ENCODE measurements at regions of chr14 and their contacts with region 1.

Region 1: DNA sequence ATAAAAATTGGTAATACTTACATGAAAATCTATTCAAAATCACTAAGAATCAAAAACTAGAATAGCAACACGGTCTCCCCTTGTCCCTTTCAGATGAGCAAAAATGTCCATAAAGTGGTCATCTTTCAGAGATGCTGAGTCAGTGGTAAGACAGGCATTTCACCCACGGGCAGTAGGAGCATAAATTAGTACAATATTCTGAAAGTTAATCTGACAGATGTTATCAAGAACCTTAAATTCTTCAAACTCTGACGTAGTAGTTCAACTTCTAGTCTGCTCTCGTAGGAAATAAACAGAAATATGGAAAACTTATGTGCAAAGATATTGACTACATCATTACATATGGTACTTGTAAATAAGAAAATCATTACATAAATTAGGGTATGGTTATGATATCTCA is 33.1 kb upstream of the GNPNAT1 start:
- DNase-seq: no peak
- H3K4me3 ChIP-seq: no peak overlapping the region
- CTCF ChIP-seq: no peak
- POLR2A ChIP-seq: no peak

Region 2: DNA sequence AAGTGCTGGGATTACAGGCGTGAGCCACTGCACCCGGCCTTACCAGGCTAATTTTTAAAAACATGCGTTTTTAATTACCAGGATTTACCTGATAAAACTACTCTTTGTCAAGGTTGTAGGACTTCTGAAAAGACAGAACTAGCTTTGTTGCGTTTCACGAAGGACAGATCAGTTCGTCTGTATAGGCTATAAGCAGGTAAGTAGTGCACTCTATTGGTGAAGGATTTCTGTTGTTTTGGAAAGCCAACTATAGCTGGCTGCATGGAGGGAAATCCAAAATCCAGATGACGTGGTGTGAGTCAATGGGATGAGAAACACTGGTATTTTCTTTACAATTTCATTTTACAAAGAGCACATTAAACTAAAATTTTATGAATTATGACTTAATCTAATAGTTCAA is 47.7 kb before region 1 on chr14:
- intact Hi-C with region 1: no loop called
- DNase-seq: no peak
- H3K4me3 ChIP-seq: no peak overlapping the region
- CTCF ChIP-seq: no peak
- POLR2A ChIP-seq: no peak

Region 3: DNA sequence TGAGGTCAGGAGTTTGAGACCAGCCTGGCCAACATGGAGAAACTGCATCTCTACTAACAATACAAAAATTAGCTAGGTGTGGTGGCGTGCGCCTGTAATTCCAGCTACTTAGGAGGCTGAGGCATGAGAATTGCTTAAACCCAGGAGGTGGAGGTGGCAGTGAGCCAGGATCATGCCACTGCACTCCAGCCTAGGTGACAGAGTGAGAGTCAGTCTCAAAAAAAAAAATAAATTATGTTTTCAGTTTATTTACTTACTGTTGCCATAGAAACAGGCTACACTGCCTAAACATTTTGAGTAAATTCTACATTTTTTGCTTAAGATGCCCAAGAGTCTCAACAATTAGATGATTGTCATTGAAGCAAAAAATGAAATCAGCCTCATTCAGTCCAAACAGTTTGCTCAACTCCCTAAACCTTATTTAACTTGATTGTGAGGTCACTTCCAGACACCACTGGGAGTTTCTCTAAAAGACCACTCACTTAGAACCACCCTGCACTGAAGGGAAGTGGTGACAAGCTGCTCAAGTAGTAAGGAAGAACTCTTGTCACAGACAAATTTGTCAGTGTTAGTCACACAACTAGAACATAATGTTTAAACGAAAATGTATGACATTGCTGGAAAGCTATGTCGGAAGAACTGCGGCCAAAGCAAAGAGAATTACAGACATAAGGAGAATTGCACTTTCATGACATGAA is 23.3 kb before region 1 on chr14:
- intact Hi-C with region 1: no loop called
- DNase-seq: no peak
- H3K4me3 ChIP-seq: no peak overlapping the region
- CTCF ChIP-seq: no peak
- POLR2A ChIP-seq: no peak

Region 4: DNA sequence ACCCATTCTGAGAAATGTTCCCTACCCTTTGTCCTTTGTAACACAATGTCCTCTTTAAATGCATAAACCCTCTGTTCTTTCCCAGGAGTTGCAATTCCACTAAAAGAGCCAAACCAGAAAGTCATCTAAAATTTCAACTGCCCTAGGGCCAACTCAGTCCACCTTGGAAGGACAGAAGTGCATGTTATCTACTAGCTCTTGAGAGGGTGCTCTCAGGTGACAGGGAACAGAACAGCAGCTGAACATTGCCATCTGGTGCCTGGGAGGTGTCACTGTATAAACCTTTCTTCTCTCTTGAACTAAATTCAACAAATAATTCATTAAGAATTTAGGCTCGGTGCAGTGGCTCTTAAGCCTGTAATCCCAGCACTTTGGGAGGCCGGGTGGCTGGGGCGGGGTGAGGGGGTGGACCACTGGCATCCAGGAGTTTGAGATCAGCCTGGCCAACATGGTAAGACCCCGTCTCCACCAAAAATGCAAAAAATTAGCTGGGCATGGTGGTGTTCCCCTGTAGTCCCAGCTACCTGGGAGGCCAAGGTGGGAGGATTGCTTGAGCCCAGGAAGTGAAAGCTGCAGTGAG is 136.6 kb after region 1 on chr14:
- intact Hi-C with region 1: loop called (anchors 5 kb)
- DNase-seq: peak in 1 of 2 donors; percentile 43
- H3K4me3 ChIP-seq: no peak overlapping the region
- CTCF ChIP-seq: peak in 1 of 3 donors; percentile 31
- POLR2A ChIP-seq: no peak

Region 5: DNA sequence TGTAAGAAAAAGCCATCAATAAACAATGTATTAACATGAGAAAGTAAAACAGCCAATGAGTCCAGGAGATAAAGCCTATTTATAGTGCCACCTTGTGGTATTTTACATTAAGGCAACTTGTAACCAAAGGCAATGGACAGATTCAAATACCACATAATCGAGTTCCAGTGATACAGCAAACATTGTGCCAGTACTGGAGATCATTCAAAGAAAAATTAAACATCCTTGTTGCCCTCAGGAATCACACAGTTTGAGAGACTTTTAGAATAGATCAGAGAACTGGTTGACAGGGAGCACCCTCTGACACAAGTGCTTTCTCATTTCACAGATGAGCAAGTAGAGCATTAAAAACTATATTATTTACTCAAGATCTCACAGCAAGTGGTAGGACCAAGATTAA is 230.5 kb after region 1 on chr14:
- intact Hi-C with region 1: loop called (anchors 10 kb)
- DNase-seq: no peak
- H3K4me3 ChIP-seq: no peak overlapping the region
- CTCF ChIP-seq: no peak
- POLR2A ChIP-seq: no peak